HCT116 (cell line): ENCODE measurements at regions of chr4 and their contacts with region 1.

Region 1: DNA sequence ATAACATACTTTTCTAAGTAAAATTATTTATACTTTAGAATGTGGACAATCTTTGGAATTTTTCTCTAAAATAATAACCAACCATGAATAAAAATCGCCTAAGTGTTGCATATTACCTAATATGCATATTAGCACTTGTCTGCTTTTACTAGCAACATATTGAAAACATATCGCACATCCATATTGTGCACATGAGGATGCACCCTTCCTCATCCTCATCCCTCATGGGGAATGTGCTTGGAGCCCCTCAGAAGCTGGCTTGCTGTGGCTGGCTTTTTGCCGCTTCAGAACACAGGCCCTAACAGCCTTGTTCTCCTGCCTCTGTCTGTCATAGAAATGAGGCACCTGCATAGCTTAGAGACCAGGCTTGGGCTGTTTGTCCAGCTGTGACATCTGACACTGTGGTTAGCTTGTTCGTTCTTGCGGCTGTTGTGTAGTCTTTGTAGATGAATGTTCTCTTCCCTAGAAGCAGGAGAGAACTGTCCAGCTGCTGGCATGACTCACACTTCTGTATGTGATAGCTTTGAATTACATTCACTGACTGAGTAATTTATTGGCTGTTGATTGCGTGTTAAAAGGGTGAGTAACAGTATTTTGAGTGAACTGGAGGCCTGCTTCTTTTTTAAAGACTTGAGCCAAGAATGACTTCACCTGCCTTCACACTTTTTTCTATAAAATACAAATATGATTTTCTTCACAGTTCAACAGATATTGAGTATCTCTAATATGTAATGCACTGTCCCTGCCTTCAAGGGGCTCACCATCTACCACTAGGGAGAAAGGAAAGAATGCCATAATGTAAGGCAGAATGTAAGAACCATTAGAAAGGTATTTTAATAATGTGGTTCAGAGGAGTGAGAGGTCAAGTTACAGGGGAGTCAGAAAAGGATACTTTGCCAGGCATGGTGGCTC is 81.9 kb downstream of the HMGB2 start:
- DNase-seq: peak; percentile 99
- ATAC-seq: peak; percentile 96
- H3K4me3 ChIP-seq: no peak overlapping the region
- H3K27ac ChIP-seq: peak overlapping the region; percentile 39; the same call in 1 of the 2 replicates
- H3K4me1 ChIP-seq: peaks cover 21 to 29% of the 10 kb centered on the region in 2 experiments
- H3K27me3 ChIP-seq: no peaks in the 10 kb centered on the region; the same call in 1 of the 2 replicates
- CTCF ChIP-seq: no peak
- POLR2A ChIP-seq: no peak
- RAD21 ChIP-seq: peak; percentile 50

Region 2: DNA sequence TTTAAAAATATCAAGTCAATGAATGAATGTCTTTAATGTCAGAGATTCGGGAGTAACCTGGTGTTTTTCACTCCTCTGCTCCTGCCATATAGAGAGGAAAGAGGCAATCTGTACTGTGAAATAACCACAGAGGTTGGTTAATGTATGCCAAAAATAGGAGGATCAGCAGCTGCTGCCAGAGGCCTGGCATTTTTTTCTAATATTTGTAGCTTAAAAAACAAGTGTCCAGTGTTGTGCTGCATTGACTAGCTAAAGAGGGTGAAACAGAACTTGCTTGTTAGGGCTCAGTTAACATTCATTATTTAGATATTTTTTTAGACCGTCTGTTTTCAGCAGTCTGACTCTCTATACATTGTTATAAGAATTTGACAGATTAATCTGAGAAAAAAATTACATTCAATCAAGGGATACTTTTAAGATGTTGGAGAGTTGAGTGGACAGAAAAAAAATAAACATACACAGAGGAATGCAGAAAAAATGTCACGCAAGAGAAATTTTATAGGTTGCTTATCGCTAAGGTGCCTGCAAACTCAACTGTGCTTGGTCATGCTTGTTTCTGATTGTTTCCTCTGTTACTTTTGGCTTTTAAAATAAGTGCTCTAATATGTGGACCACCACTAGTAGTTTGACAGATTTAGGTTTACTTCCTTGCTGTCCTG is 475.9 kb before region 1 on chr4:
- CTCF ChIA-PET with region 1: no interaction called
- POLR2A ChIA-PET with region 1: no interaction called
- RAD21 ChIA-PET with region 1: no interaction called
- intact Hi-C with region 1: no loop called
- DNase-seq: no peak
- ATAC-seq: no peak
- H3K4me3 ChIP-seq: no peak overlapping the region
- H3K27ac ChIP-seq: no peak overlapping the region
- H3K4me1 ChIP-seq: no peaks in the 10 kb centered on the region
- H3K27me3 ChIP-seq: no peaks in the 10 kb centered on the region
- CTCF ChIP-seq: no peak
- POLR2A ChIP-seq: no peak
- RAD21 ChIP-seq: no peak

Region 3: DNA sequence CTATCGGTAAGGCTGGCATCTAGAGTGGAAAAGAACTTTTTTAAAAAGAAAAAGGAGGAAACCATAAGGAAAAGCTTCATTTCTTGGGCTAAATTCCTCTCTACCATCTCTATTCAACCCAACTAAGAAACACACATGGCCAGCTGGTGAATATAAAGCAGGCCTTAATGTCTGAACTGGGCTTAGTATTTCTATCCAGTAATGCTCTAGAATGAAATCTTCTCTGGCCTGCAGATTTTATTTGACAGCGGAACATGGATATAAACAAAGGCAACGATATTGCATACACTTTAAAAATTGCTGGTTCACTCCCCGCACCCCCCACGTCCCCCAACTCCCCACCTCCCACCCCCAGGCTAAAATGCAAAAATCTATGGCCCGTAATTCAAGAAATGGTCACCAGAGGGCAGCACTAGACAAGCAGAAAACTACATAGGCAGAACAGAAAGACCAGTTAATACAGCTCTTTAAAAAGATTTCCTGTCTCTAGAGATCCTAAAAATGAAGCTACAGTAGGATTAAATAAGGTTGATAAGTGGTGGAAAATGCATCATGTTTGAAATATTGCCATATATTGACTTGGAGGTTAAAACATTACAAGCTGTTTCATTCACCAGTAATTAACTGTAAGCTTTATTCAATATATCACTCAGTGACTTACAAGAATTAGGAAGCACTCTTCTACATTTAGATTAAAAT is 238.9 kb before region 1 on chr4:
- CTCF ChIA-PET with region 1: interaction called, 88 read pairs
- POLR2A ChIA-PET with region 1: no interaction called
- RAD21 ChIA-PET with region 1: interaction called, 9 to 13 read pairs
- intact Hi-C with region 1: loop called (anchors 1 kb)
- DNase-seq: no peak
- ATAC-seq: peak; percentile 61
- H3K4me3 ChIP-seq: no peak overlapping the region
- H3K27ac ChIP-seq: no peak overlapping the region
- H3K4me1 ChIP-seq: peaks cover 0 to 9% of the 10 kb centered on the region in 2 experiments; a peak in 2 of 4 replicates
- H3K27me3 ChIP-seq: no peaks in the 10 kb centered on the region
- CTCF ChIP-seq: peak; percentile 50 to 71 (median 69)
- POLR2A ChIP-seq: no peak
- RAD21 ChIP-seq: peak; percentile 81

Region 4: GRCh38 chr4:173168396-173169177 is 83.7 kb before region 1 on chr4 and contains the start of gene GALNT7:
- CTCF ChIA-PET with region 1: no interaction called
- POLR2A ChIA-PET with region 1: interaction called, 3 read pairs
- RAD21 ChIA-PET with region 1: no interaction called
- intact Hi-C with region 1: loop called (anchors 1 kb)
- DNase-seq: no peak
- ATAC-seq: peak; percentile 74
- H3K4me3 ChIP-seq: peak within 1 kb of the TSS; percentile 68 to 80
- H3K27ac ChIP-seq: peak within 1 kb of the TSS; percentile 98
- H3K4me1 ChIP-seq: peaks cover 17 to 36% of the 10 kb centered on the region in 2 experiments; a peak in 3 of 4 replicates
- H3K27me3 ChIP-seq: no peaks in the 10 kb centered on the region
- CTCF ChIP-seq: no peak
- POLR2A ChIP-seq: peak; percentile 55
- RAD21 ChIP-seq: no peak
- total RNA-seq, gene GALNT7: 21.3 TPM

Region 5: DNA sequence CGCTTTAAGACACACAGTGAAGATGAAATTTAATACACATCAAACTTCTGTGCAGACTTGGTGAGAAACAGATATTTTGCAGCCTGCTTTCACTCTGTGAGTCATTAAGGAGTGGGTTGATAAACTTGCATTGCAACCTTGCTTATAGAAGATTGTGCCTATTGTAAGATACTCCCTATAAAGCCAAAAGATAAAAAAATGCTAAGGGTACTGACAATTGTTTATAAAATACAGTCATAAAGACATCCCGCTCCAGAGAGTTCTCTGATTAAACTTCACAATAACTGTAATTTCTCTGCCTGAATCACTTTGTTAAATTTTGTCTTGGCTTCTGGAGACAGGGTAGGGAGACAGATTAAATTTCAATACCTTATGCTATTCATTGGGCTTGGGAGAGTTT is 34.6 kb before region 1 on chr4:
- CTCF ChIA-PET with region 1: no interaction called
- POLR2A ChIA-PET with region 1: no interaction called
- RAD21 ChIA-PET with region 1: no interaction called
- intact Hi-C with region 1: loop called (anchors 2 kb)
- DNase-seq: no peak
- ATAC-seq: no peak
- H3K4me3 ChIP-seq: peak overlapping the region in 1 of 2 experiments; percentile 35; a peak in 1 of 4 replicates
- H3K27ac ChIP-seq: peak overlapping the region; percentile 50; the same call in 1 of the 2 replicates
- H3K4me1 ChIP-seq: peaks cover 35 to 68% of the 10 kb centered on the region in 2 experiments
- H3K27me3 ChIP-seq: no peaks in the 10 kb centered on the region
- CTCF ChIP-seq: no peak
- POLR2A ChIP-seq: no peak
- RAD21 ChIP-seq: no peak